ENCODE measurements at regions of chr17 and their contacts with region 1.

Region 1: GRCh38 chr17:64129764-64130558 is at the start of gene ERN1:
- DNase-seq: peak; percentile 92
- H3K4me3 Mint-ChIP-seq: peak within 1 kb of the TSS; percentile 84
- H3K27ac Mint-ChIP-seq: peak within 1 kb of the TSS; percentile 91
- H3K4me1 Mint-ChIP-seq: peaks cover 53% of the 10 kb centered on the region
- H3K27me3 Mint-ChIP-seq: no peaks in the 10 kb centered on the region
- total RNA-seq, gene ERN1: 126 to 128 TPM

Region 2: GRCh38 chr17:63911657-63912426 is 218.1 kb before region 1 on chr17:
- CTCF ChIA-PET with region 1: interaction called, 55 read pairs
- POLR2A ChIA-PET with region 1: no interaction called
- DNase-seq: peak; percentile 69
- H3K4me3 Mint-ChIP-seq: no peak overlapping the region
- H3K27ac Mint-ChIP-seq: no peak overlapping the region
- H3K4me1 Mint-ChIP-seq: no peaks in the 10 kb centered on the region
- H3K27me3 Mint-ChIP-seq: peaks cover 26% of the 10 kb centered on the region

Region 3: GRCh38 chr17:63984651-63985386 is 145.1 kb before region 1 on chr17:
- CTCF ChIA-PET with region 1: interaction called, 10 read pairs
- POLR2A ChIA-PET with region 1: interaction called, 8 read pairs
- DNase-seq: peak; percentile 79
- H3K4me3 Mint-ChIP-seq: no peak overlapping the region
- H3K27ac Mint-ChIP-seq: peak overlapping the region; percentile 85
- H3K4me1 Mint-ChIP-seq: peaks cover 35% of the 10 kb centered on the region
- H3K27me3 Mint-ChIP-seq: no peaks in the 10 kb centered on the region

Region 4: DNA sequence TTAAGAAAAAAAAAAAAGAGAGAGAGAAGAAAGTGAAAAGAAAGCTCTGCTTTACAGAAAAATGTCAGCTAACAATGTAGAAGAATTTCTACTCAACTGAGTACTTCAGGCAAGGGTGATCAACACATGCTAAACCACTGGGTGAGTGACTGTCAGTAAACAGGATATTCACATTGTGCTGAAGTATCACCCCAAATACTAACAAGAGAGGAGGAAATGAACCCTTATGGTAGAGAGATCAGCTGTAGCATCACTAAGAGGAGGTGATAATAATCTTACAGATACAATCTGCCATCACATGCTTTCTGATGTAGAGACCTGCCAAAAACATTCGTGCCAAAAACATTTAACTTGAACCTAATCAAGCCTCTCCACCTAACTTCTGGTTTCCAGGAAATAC is 78.8 kb before region 1 on chr17:
- CTCF ChIA-PET with region 1: interaction called, 26 read pairs
- POLR2A ChIA-PET with region 1: interaction called, 31 read pairs
- DNase-seq: peak; percentile 34
- H3K4me3 Mint-ChIP-seq: peak overlapping the region; percentile 18
- H3K27ac Mint-ChIP-seq: peak overlapping the region; percentile 90
- H3K4me1 Mint-ChIP-seq: peaks cover 57% of the 10 kb centered on the region
- H3K27me3 Mint-ChIP-seq: no peaks in the 10 kb centered on the region

Region 5: DNA sequence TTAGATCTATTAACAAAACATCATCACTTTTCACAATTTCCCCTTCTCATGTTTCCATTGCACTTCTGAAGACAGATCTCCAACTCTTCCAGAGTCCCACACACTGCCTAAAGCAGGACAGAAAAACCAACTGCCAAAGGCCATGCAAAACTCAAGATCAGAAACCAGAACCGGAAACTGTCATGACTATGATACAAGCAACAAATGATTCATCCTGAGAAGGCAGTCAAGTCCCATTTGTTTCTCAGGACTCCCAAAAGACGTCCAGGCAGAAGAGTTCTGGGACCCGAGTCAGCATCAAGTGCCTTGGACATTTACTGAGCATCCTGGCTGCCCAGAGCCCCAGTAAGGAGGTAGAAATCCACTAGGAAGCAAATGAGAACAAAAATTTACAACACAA is 38.8 kb before region 1 on chr17:
- CTCF ChIA-PET with region 1: interaction called, 7 read pairs
- POLR2A ChIA-PET with region 1: interaction called, 15 read pairs
- DNase-seq: peak; percentile 40
- H3K4me3 Mint-ChIP-seq: peak overlapping the region; percentile 56
- H3K27ac Mint-ChIP-seq: peak overlapping the region; percentile 96
- H3K4me1 Mint-ChIP-seq: peaks cover 90% of the 10 kb centered on the region
- H3K27me3 Mint-ChIP-seq: no peaks in the 10 kb centered on the region

Region 6: GRCh38 chr17:64281962-64282727 is 152.2 kb after region 1 on chr17:
- CTCF ChIA-PET with region 1: interaction called, 11 read pairs
- POLR2A ChIA-PET with region 1: interaction called, 4 read pairs
- DNase-seq: peak; percentile 55
- H3K4me3 Mint-ChIP-seq: no peak overlapping the region
- H3K27ac Mint-ChIP-seq: no peak overlapping the region
- H3K4me1 Mint-ChIP-seq: peaks cover 6% of the 10 kb centered on the region
- H3K27me3 Mint-ChIP-seq: no peaks in the 10 kb centered on the region

Measured in activated CD4-positive, alpha-beta memory T cell treated with anti-CD3 and anti-CD28 coated beads, Interleukin-2, amount 10 ng/mL, durations not matched to agents 7 days and 5 days (primary cell).